Naive thymus-derived CD4-positive, alpha-beta T cell (primary cell): ENCODE measurements at regions of chr12 and their contacts with region 1.

Region 1: DNA sequence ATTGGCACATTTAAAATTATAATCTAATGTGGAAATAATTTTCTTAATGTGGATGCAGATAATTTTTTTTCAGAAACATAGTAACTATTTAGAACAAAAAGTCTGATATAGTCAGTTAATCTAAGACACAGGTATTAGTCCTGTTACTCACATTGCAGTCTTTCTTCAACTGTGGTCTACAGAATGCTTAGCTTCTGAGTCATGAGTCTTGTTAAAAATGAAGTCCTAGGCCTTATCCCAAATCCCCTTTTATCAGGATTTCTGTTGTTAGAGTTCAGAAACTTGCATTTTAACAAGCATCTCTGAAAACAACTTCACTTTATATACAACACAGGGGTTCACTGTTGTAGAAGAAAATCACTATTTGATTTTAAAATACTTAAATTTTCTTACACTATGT is 112.2 kb downstream of the SLC16A7 start:
- DNase-seq: no peak
- ATAC-seq: no peak
- H3K4me3 ChIP-seq: no peak overlapping the region
- H3K4me3 Mint-ChIP-seq: no peak overlapping the region
- H3K27ac ChIP-seq: no peak overlapping the region
- H3K27ac Mint-ChIP-seq: no peak overlapping the region
- H3K4me1 ChIP-seq: no peaks in the 10 kb centered on the region
- H3K4me1 Mint-ChIP-seq: peaks cover 0 to 34% (median 19%) of the 10 kb centered on the region in 7 donors
- H3K27me3 ChIP-seq: no peaks in the 10 kb centered on the region
- H3K27me3 Mint-ChIP-seq: no peaks in the 10 kb centered on the region

Region 2: GRCh38 chr12:59723517-59723916 is 15.5 kb after region 1 on chr12:
- CTCF ChIA-PET with region 1: no interaction called
- POLR2A ChIA-PET with region 1: no interaction called
- intact Hi-C with region 1: loop called in 1 of 2 experiments (anchors 1 kb)
- DNase-seq: no peak
- ATAC-seq: no peak
- H3K4me3 ChIP-seq: no peak overlapping the region
- H3K4me3 Mint-ChIP-seq: no peak overlapping the region
- H3K27ac ChIP-seq: no peak overlapping the region
- H3K27ac Mint-ChIP-seq: no peak overlapping the region
- H3K4me1 ChIP-seq: no peaks in the 10 kb centered on the region
- H3K4me1 Mint-ChIP-seq: peaks cover 0 to 26% (median 12%) of the 10 kb centered on the region in 7 donors
- H3K27me3 ChIP-seq: no peaks in the 10 kb centered on the region
- H3K27me3 Mint-ChIP-seq: no peaks in the 10 kb centered on the region